ENCODE measurements at regions of chr3 and their contacts with region 1.

Region 1: GRCh38 chr3:15268033-15268631 is 62.1 kb downstream of the CAPN7 start:
- DNase-seq: peak; percentile 66 to 97 (median 86)

Region 2: GRCh38 chr3:15040844-15041243 is 227.3 kb before region 1 on chr3:
- intact Hi-C with region 1: no loop called
- DNase-seq: no peak

Region 3: DNA sequence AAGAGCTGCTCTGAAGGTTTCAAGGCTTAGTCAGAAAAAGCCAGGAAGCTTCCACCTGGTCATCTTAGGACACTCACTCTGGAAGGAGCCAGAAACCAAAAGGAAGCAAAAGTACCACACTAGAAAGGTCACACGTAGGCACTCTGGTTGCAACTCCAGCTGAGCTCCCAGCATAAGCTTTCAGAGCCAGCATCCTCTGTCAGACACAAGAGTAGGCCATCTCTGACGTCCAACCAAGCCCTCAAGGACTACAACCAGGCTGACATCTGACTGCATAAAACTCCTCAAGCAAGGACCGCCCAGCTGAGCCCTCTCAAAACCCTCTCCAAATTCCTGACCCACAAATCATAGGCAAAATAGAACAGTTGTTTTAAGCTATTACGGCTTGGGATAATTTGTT is 51.4 kb after region 1 on chr3:
- intact Hi-C with region 1: no loop called
- DNase-seq: peak in 1 of 10 donors; percentile 20

Region 4: GRCh38 chr3:15332405-15333098 is 64.4 kb after region 1 on chr3 and contains the start of gene SH3BP5:
- intact Hi-C with region 1: loop called (anchors 1 kb)
- DNase-seq: peak; percentile 62 to 96 (median 76)

Region 5: GRCh38 chr3:15377961-15378791 is 110.0 kb after region 1 on chr3:
- intact Hi-C with region 1: loop called (anchors 1 kb)
- DNase-seq: peak; percentile 89 to 99 (median 96)

Measured in posterior cingulate gyrus (tissue), 11 donors.